Activated CD4-positive, alpha-beta T cell treated with anti-CD3 and anti-CD28 coated beads for 36 hours (primary cell): ENCODE measurements at regions of chr1 and their contacts with region 1.

Region 1: DNA sequence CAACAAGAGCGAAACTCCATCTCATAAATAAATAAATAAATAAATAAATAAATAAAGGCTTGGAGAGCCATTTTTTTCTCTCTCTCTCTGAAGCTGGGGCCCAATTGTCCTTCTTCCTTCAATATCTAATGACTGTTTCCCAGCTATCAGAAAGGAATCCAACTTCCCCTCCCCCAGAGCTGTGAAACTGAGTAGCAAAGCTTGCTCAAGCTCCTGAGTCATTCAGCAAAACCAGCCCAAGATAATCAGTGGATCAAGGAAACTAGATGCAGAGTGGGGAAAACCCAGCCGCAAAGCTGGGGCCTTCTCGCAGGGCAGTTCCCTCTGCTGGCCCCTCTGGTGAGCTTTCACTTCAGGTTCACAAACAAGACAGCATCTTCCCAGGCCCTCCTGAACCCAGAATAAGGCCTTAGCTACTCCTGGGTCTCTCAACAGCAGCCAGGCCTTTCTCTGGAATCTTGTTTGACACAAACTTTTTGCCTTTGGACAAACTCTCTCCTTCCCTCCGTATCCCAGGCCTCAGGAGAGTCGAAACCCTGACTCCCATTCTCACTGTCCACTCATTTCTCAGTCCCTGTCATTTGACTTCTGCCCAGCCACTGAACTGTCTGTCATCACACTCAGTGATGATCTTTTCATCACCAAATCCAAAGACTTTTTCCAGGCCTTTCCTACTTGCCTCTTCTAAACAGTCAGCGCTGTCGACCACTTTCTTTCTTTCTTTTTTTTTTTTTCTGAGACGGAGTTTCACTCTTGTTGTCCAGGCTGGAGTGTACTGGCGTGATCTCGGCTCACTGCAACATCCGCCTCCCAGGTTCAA is 18.0 kb upstream of the PTP4A2 start:
- DNase-seq: peak; percentile 93
- ATAC-seq: peak; percentile 83
- H3K4me3 Mint-ChIP-seq: peak overlapping the region; percentile 60
- H3K27ac Mint-ChIP-seq: peak overlapping the region; percentile 95
- H3K4me1 Mint-ChIP-seq: peaks cover 81% of the 10 kb centered on the region
- H3K27me3 Mint-ChIP-seq: no peaks in the 10 kb centered on the region

Region 2: DNA sequence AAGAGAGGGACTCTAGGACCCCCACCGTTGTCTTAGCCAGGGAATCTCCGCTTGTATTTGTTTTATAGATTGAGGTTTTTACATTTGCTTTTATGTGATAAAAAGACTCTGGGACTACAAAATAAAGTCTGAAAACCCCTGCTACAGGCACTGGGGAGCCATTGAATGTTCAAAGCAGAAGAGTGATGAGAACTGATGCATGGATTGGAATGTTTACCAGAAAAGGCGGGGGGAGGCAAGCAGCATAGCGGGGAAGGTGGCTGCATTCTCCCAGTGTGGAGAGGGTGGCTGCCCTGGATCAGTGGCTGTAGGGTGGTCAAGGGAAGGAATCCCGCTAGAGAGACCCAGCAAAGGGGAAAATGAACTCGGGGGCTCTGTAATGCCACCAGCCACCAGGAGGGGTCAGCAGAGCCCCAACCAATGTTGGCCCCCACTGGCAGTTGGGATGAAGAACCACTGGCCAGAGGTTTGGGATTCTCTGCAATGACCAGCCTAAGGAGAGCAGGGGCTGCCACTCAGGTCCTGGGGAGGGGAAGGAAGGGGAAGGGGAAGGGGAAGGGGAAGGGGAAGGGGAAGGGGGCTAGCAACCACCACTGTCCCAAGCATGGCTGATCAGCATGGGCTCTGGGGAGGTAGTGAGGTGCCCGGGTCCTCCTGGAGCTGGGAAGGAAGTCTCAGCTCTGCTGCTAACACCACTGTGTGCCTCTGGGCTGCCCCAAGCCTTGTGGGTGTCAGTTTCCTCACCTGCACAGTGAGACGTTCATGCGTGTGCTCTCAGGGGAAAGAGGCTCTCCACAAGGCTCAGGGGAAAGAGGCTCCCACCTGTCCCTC is 292.3 kb before region 1 on chr1:
- CTCF ChIA-PET with region 1: no interaction called
- POLR2A ChIA-PET with region 1: no interaction called
- intact Hi-C with region 1: loop called in 1 of 2 experiments (anchors 10 kb)
- DNase-seq: peak; percentile 71
- ATAC-seq: peak; percentile 55
- H3K4me3 Mint-ChIP-seq: no peak overlapping the region
- H3K27ac Mint-ChIP-seq: no peak overlapping the region
- H3K4me1 Mint-ChIP-seq: no peaks in the 10 kb centered on the region
- H3K27me3 Mint-ChIP-seq: no peaks in the 10 kb centered on the region

Region 3: DNA sequence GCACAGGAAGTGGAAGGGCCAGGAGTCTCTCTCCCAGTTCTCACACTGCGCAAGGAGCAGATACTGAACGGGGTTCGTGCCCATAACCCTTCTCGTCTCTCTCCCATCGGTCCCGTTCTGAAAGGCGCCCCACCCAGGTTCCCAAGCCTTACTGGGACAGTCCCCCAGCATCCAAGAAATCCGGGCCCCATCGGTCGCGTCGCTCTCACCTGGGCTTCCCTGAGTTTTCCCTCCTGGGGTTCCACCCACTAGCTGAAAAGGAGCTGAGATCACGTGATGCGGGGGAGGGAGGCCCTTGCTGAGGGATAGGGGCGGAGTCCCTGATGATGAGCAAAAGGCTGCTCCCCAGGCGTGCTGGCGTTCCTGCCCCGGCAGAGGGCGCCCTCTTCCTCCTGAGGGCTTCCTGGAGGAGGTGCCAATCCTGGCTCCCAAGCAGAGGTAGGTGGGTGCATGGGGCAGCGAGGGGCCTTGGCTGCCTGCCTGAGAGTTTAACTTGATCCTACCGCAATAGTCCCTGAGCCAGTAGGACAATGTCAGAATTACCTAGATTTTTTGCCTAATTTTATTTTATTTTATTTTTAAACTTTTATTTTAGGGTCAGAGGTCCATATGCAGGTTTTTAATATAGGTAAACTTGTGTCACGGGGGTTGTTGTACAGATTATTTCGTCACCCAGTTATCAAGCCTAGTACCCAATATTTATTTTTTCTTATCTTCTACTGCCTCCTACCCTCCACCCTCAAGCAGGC is 140.2 kb before region 1 on chr1 and contains the start of gene SPOCD1:
- CTCF ChIA-PET with region 1: interaction called, 86 read pairs
- POLR2A ChIA-PET with region 1: interaction called, 8 read pairs
- intact Hi-C with region 1: no loop called
- DNase-seq: peak; percentile 94
- ATAC-seq: peak; percentile 93
- H3K4me3 Mint-ChIP-seq: no peak within 1 kb of the TSS
- H3K27ac Mint-ChIP-seq: peak within 1 kb of the TSS; percentile 17
- H3K4me1 Mint-ChIP-seq: peaks cover 9% of the 10 kb centered on the region
- H3K27me3 Mint-ChIP-seq: no peaks in the 10 kb centered on the region
- total RNA-seq, gene SPOCD1: 0.79 to 0.91 TPM

Region 4: GRCh38 chr1:31910933-31911332 is 45.2 kb before region 1 on chr1:
- CTCF ChIA-PET with region 1: interaction called, 8 read pairs
- POLR2A ChIA-PET with region 1: interaction called, 5 read pairs
- intact Hi-C with region 1: loop called (anchors 1 to 2 kb)
- DNase-seq: peak; percentile 55
- ATAC-seq: peak; percentile 80
- H3K4me3 Mint-ChIP-seq: no peak overlapping the region
- H3K27ac Mint-ChIP-seq: peak overlapping the region; percentile 70
- H3K4me1 Mint-ChIP-seq: peaks cover 57% of the 10 kb centered on the region
- H3K27me3 Mint-ChIP-seq: no peaks in the 10 kb centered on the region

Region 5: DNA sequence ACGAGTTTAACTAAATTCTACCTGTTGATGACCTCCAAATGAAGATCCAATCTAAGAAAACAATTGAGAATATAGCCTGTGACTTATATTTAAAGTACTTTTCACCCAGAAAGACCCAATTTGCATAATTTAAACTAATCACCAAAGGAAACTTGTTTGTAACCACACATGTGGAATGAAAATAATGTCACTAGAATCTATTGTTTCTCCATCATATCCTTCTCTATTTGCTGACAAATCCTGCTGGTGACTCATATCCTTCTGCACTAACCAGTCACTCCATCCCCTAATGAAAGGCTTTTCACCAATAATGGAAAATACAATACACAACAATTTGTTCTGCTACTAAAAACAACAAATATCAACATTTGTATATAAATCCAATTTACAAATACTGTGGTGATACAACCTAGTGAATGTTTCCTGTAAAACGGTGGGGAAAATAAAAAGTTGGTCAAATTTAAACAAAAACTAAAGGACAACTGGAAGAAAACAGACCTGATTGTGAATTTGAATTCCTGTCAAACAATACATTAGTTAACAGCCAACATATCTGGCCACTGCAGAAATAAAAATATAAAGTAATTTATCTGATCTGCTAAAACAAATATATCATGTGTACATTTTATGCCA is 24.4 kb before region 1 on chr1:
- CTCF ChIA-PET with region 1: interaction called, 41 read pairs
- POLR2A ChIA-PET with region 1: interaction called, 13 read pairs
- intact Hi-C with region 1: loop called (anchors 1 kb)
- DNase-seq: no peak
- ATAC-seq: peak; percentile 4
- H3K4me3 Mint-ChIP-seq: peak overlapping the region; percentile 91
- H3K27ac Mint-ChIP-seq: peak overlapping the region; percentile 91
- H3K4me1 Mint-ChIP-seq: peaks cover 90% of the 10 kb centered on the region
- H3K27me3 Mint-ChIP-seq: no peaks in the 10 kb centered on the region

Region 6: DNA sequence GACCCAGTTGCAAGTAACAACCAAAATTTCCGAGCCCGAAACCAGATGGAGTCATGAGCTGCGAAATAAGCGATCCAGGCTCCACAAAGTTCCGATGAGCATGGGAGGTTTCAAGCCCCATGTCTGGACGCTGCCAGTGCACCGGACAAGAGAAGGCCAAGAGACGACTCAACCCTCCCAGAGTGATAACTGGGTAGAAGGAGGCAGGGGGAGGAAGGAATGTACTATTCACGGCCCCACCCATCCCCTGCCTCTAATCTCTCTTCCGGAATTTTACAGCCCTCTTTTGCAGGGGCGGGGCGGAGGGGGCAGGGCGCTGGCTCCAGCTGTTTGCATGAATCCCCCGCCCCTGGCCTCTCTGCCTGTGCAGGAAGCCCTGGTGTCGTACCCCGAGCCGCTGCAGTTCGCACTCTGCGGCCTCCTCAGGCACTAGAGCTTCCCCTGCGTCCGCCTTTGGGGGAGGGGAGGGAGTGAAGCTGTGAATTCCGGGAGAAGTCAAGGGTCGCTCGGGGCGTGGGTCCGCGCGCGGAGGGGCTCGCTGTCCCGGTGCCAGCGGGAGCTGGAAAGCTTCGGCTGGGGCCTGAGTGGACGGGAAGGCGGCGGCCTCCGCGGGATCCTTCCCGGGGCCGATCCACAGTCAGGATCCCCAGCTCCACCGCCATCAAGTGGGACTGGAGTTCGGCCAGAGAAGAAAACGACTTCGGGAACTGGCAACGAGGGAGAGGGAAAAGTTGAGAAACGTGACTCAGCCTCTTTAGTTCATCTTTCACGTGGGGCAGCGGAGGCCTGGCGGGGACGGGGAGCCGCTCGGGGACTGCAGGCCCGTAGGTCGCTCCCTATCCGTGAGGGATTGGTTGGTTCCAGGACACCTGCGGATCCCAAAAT is 11.7 kb before region 1 on chr1:
- CTCF ChIA-PET with region 1: interaction called, 175 read pairs
- POLR2A ChIA-PET with region 1: interaction called, 41 read pairs
- intact Hi-C with region 1: loop called (anchors 1 kb)
- DNase-seq: peak; percentile 91
- ATAC-seq: peak; percentile 65
- H3K4me3 Mint-ChIP-seq: peak overlapping the region; percentile 65
- H3K27ac Mint-ChIP-seq: peak overlapping the region; percentile 88
- H3K4me1 Mint-ChIP-seq: peaks cover 52% of the 10 kb centered on the region
- H3K27me3 Mint-ChIP-seq: no peaks in the 10 kb centered on the region

Region 7: GRCh38 chr1:31984419-31985347 is 28.6 kb after region 1 on chr1:
- CTCF ChIA-PET with region 1: no interaction called
- POLR2A ChIA-PET with region 1: no interaction called
- intact Hi-C with region 1: no loop called
- DNase-seq: peak; percentile 67
- ATAC-seq: peak; percentile 90
- H3K4me3 Mint-ChIP-seq: peak overlapping the region; percentile 7
- H3K27ac Mint-ChIP-seq: peak overlapping the region; percentile 94
- H3K4me1 Mint-ChIP-seq: peaks cover 51% of the 10 kb centered on the region
- H3K27me3 Mint-ChIP-seq: no peaks in the 10 kb centered on the region